Activated CD8-positive, alpha-beta T cell treated with anti-CD3 and anti-CD28 coated beads for 36 hours (primary cell): ENCODE measurements at regions of chr19 and their contacts with region 1.

Region 1: GRCh38 chr19:3500429-3501130 is at the start of gene DOHH:
- DNase-seq: peak; percentile 97
- ATAC-seq: peak; percentile 92
- H3K4me3 Mint-ChIP-seq: peak within 1 kb of the TSS; percentile 90
- H3K27ac Mint-ChIP-seq: peak within 1 kb of the TSS; percentile 95
- H3K4me1 Mint-ChIP-seq: peaks cover 20% of the 10 kb centered on the region
- H3K27me3 Mint-ChIP-seq: no peaks in the 10 kb centered on the region
- CTCF ChIP-seq: no peak
- total RNA-seq, gene DOHH: 15.7 to 17.0 TPM

Region 2: DNA sequence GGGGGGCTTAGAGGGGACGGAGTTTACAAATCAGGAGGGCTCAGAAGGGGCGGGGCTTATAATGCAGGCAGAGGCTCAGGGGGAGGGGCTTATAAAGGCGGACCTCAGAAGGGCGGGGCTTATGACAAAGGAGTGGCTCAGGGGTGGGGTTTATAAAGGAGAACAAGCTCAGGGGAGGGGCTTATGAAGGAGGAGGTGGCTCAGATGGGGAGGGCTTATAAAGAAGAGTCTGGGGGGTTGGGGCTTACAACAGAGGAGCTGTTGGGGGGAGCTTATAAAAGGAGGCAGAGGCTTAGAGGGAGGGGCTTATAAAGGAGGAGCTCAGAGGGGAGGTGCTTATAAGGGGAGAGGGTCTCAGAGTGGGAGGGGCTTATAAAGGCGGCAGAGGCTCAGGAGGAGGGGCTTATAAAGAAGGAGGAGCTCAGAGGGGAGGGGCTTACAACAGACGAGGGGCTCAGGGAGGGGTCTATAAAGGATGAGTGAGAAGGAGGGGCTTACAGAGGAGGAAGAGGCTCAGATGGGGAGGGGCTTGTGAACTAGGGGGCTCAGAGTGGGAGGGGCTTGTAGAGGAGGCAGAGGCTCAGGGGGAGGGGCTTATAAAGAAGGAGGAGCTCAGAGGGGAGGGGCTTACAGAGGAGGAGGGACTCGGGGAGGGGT is 21.3 kb before region 1 on chr19:
- CTCF ChIA-PET with region 1: interaction called, 54 read pairs
- POLR2A ChIA-PET with region 1: interaction called, 3 read pairs
- intact Hi-C with region 1: no loop called
- DNase-seq: peak; percentile 84
- ATAC-seq: peak; percentile 87
- H3K4me3 Mint-ChIP-seq: no peak overlapping the region
- H3K27ac Mint-ChIP-seq: no peak overlapping the region
- H3K4me1 Mint-ChIP-seq: peaks cover 16% of the 10 kb centered on the region
- H3K27me3 Mint-ChIP-seq: no peaks in the 10 kb centered on the region
- CTCF ChIP-seq: no peak